GM13977 (cell line): ENCODE measurements at regions of chr20 and their contacts with region 1.

Region 1: DNA sequence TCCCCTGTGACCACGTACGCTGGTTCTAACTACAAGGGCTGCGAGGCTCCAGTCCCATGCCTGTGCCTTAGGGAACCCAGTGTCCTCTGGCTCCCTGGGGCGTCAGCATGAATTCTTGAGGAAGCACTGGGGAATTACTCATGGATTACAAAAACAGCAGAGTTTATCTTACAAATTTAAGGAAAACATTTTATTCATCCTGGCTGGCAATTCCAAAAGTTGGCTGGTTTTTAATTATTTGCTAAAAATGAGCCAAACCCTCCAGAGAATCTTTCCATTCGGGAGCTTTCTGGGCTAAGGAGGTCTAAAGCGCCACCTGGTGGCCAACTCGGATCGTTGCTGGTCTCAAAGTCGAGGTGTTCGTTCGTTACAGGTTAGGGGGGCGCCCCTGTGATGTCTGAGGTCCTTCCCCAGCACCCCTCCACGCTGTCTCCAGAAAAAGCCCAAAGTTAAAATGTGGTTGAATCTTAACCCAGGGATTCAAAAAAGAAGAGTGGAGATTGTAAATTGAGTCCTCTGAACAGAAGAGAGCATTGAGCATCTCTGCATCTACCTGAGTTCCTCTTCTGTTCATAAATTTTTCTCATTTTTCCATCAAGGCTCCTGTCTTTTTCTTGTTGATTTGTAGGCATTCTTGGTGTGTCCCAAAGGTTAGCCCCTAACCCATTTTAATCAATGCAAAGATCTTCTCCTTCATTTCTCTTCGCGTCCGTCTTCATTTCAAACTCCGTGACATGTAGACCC is 99.4 kb downstream of the BFSP1 start:
- DNase-seq: peak; percentile 64
- CTCF ChIP-seq: peak; percentile 87

Region 2: GRCh38 chr20:16801919-16802911 is 629.6 kb before region 1 on chr20:
- in situ Hi-C with region 1: loop called (anchors 25 kb)
- DNase-seq: peak; percentile 32
- CTCF ChIP-seq: peak; percentile 82